Activated CD4-positive, alpha-beta T cell treated with anti-CD3 and anti-CD28 coated beads for 36 hours (primary cell): ENCODE measurements at regions of chr2 and their contacts with region 1.

Region 1: DNA sequence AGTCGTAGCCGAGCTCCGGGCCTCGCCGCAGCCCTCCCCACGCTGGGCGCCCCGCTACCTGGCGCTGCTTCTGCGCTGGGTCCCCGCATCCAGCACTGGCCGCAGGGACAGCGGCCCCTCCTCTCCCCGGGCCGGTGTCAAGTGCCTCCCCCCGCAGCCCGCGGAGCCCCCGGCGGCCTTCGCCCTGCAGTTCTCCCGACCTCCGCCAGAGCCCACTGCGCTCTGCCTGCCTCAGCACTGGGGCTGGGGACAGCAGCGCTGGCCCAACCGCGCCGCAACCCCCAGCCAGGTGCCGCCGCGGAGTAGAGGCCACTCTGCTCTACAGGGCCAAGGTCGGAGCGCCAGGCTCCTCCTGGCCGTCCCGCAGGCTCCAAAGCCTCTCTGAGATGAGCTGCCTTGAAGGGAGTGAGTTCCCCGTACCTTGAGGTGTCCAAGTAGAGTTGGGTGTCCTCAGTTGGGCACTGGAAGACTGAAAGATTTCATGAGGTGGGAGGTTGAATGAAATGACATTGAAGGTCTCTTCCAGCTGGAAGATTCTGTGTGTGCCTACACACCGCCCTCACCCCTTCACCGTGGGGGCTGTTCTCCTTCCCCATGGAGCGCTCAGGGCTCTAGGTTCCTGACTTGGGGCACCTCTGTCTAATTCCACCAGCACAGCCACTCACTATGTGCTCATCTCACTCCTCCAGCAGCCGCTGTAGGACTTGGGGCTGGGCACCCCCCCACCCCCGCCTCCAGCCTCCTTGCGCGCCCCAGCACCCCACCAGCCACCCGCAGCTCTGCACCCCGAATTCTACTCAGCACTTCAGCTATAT is 854 bp upstream of the DNMT3A start:
- DNase-seq: peak; percentile 90
- ATAC-seq: peak; percentile 80
- H3K4me3 Mint-ChIP-seq: peak overlapping the region; percentile 75
- H3K27ac Mint-ChIP-seq: no peak overlapping the region
- H3K4me1 Mint-ChIP-seq: peaks cover 39% of the 10 kb centered on the region
- H3K27me3 Mint-ChIP-seq: no peaks in the 10 kb centered on the region

Region 2: GRCh38 chr2:24329700-24330099 is 1012.9 kb before region 1 on chr2:
- CTCF ChIA-PET with region 1: no interaction called
- POLR2A ChIA-PET with region 1: no interaction called
- intact Hi-C with region 1: no loop called
- DNase-seq: no peak
- ATAC-seq: no peak
- H3K4me3 Mint-ChIP-seq: no peak overlapping the region
- H3K27ac Mint-ChIP-seq: no peak overlapping the region
- H3K4me1 Mint-ChIP-seq: peaks cover 27% of the 10 kb centered on the region
- H3K27me3 Mint-ChIP-seq: no peaks in the 10 kb centered on the region

Region 3: GRCh38 chr2:25276569-25277465 is 65.8 kb before region 1 on chr2:
- CTCF ChIA-PET with region 1: interaction called, 3 read pairs
- POLR2A ChIA-PET with region 1: no interaction called
- intact Hi-C with region 1: loop called in 1 of 2 experiments (anchors 1 kb)
- DNase-seq: peak; percentile 90
- ATAC-seq: peak; percentile 65
- H3K4me3 Mint-ChIP-seq: peak overlapping the region; percentile 9
- H3K27ac Mint-ChIP-seq: peak overlapping the region; percentile 90
- H3K4me1 Mint-ChIP-seq: peaks cover 70% of the 10 kb centered on the region
- H3K27me3 Mint-ChIP-seq: no peaks in the 10 kb centered on the region

Region 4: DNA sequence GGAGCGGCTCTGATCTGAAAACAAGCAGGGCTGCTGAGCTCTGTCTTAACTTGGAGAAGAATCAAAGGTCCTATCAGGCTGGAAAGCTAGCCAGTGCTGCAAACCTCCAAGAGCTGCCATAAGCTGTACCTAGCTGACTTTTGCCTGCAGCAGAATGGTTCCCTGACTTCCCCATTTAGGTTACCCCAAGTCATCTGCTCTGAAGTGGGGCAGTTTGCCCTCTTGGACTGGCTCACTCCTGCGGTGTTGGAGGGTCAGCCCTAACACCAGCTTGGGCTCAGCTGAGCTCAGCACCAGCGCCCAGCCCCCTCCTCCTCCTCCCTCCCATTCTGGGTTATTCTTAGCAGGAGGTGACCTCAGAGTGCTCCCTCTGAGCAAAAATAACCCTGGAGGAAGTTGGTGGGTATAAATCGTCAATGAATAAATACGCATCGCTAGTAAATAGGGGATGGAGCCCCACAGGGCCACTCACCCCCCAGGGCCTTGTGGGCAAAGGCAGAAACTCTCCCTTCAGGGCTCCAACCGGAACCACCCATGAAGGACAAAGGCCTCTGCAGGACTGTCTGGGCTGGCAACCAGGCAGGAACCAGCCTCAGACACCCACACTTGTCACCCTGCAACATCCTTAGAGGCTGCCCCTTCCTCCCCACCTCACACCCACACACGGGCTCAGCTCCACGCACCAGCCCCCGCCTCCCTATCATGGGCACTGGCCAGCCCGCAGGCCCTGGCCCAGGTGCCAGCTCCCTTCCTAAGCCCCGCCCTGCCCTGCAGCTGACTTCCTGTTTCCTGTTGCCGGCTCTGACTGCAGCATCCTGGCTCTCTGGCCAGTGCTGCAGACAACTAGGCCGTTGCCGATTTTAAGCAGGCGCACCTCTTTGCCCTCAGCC is 47.8 kb before region 1 on chr2:
- CTCF ChIA-PET with region 1: interaction called, 4 read pairs
- POLR2A ChIA-PET with region 1: interaction called, 3 read pairs
- intact Hi-C with region 1: loop called in 1 of 2 experiments (anchors 2 kb)
- DNase-seq: peak; percentile 87
- ATAC-seq: peak; percentile 96
- H3K4me3 Mint-ChIP-seq: peak overlapping the region; percentile 54
- H3K27ac Mint-ChIP-seq: peak overlapping the region; percentile 92
- H3K4me1 Mint-ChIP-seq: peaks cover 59% of the 10 kb centered on the region
- H3K27me3 Mint-ChIP-seq: no peaks in the 10 kb centered on the region

Region 5: DNA sequence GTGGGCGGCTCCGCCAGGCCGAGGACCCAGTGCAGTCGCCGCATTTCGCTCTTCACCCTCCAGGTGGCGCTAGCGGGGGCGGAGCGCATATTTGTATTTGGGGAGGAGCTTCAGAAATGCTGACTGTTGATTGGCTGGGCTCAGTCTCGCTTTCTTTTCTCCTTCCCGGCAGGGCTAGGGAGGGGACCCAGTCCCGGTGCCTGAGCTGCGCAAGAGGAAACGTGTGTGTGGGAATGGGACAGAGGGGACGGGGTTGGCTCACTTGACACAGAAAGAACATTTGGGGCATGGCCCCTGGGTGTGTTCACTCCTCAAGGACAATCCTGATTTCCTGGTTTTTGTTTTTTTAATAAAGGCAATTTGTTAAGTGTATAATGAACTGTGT is 19.5 kb after region 1 on chr2:
- CTCF ChIA-PET with region 1: interaction called, 30 read pairs
- POLR2A ChIA-PET with region 1: no interaction called
- intact Hi-C with region 1: loop called in 1 of 2 experiments (anchors 1 kb)
- DNase-seq: peak; percentile 97
- ATAC-seq: peak; percentile 97
- H3K4me3 Mint-ChIP-seq: peak overlapping the region; percentile 79
- H3K27ac Mint-ChIP-seq: peak overlapping the region; percentile 96
- H3K4me1 Mint-ChIP-seq: peaks cover 14% of the 10 kb centered on the region
- H3K27me3 Mint-ChIP-seq: no peaks in the 10 kb centered on the region

Region 6: GRCh38 chr2:25453199-25453905 is 110.8 kb after region 1 on chr2:
- CTCF ChIA-PET with region 1: no interaction called
- POLR2A ChIA-PET with region 1: no interaction called
- intact Hi-C with region 1: loop called in 1 of 2 experiments (anchors 1 kb)
- DNase-seq: peak; percentile 69
- ATAC-seq: peak; percentile 97
- H3K4me3 Mint-ChIP-seq: peak overlapping the region; percentile 19
- H3K27ac Mint-ChIP-seq: peak overlapping the region; percentile 91
- H3K4me1 Mint-ChIP-seq: peaks cover 30% of the 10 kb centered on the region
- H3K27me3 Mint-ChIP-seq: no peaks in the 10 kb centered on the region

Region 7: GRCh38 chr2:25567406-25567805 is 224.8 kb after region 1 on chr2:
- CTCF ChIA-PET with region 1: no interaction called
- POLR2A ChIA-PET with region 1: no interaction called
- intact Hi-C with region 1: loop called in 1 of 2 experiments (anchors 1 kb)
- DNase-seq: no peak
- ATAC-seq: peak; percentile 55
- H3K4me3 Mint-ChIP-seq: no peak overlapping the region
- H3K27ac Mint-ChIP-seq: no peak overlapping the region
- H3K4me1 Mint-ChIP-seq: peaks cover 3% of the 10 kb centered on the region
- H3K27me3 Mint-ChIP-seq: no peaks in the 10 kb centered on the region

Region 8: DNA sequence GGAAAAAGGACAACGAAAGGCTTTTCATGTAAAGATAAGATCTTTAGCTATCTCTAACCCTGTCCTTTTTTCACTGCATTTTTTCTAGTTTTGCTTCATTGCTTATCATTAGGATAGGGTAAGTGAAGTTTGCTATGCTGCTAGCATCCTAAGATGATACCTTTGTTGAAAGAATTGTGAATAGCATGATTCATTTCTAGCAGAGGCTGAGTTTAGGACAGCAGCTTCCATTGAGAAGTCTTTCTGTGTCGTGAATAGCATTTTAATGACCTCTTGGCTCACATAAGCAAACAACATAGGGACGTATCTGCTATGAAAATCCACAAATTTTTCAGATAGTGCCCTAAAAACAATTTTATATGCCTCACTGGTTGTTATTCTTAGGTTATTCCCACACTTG is 793.9 kb after region 1 on chr2:
- CTCF ChIA-PET with region 1: no interaction called
- POLR2A ChIA-PET with region 1: no interaction called
- intact Hi-C with region 1: no loop called
- DNase-seq: no peak
- ATAC-seq: no peak
- H3K4me3 Mint-ChIP-seq: no peak overlapping the region
- H3K27ac Mint-ChIP-seq: no peak overlapping the region
- H3K4me1 Mint-ChIP-seq: peaks cover 3% of the 10 kb centered on the region
- H3K27me3 Mint-ChIP-seq: no peaks in the 10 kb centered on the region